ENCODE measurements at regions of chr9 and their contacts with region 1.

Region 1: GRCh38 chr9:71806901-71807307 is 38.6 kb upstream of the CEMIP2 start:
- DNase-seq: peak; percentile 80 to 91 (median 90)
- H3K4me3 ChIP-seq: no peak overlapping the region
- H3K27ac ChIP-seq: no peak overlapping the region
- H3K4me1 ChIP-seq: peaks cover 0 to 4% (median 4%) of the 10 kb centered on the region in 4 experiments
- H3K27me3 ChIP-seq: no peaks in the 10 kb centered on the region

Region 2: DNA sequence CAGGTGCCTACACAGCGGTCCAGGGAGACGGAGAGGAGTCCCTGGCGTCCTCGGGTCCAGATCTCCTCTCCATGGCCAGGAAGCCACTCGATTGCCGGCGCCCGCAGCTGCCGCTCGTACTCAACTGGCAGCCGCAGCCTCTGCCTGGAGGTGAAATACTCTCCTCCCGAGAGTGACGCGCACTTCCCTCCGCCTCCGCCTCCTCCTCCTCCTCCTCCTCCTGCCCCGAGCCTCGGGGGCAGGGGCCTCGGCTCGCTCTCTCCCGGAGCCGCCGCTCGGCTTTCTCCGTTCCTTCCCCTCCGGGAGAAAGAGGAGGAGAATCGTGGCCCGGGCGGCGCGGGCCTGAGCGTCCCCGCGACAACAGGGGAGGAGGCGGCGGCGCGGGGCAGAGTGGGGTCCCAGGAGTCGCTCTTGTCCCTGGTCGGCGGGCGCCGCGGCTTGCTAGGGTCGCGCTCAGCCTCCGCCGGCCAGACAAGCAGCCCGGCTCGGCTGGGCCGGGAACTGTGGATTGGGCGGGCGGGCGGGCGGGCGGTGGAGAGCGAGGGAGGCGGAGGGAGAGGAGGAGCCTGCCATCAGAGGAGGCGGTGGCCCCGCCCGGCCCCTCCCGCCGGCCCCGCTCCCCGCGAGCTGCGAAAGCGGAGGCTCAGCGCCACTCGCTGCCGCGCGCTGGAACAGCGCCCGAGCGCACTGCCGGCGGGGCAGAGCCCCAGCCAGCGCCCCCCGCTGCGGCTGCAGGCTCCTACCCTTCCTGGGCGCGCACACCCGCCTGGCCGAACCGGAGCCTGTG is 38.3 kb before region 1 on chr9 and contains the start of gene CEMIP2:
- CTCF ChIA-PET with region 1: no interaction called
- POLR2A ChIA-PET with region 1: no interaction called
- DNase-seq: peak; percentile 90 to 96 (median 95)
- H3K4me3 ChIP-seq: peak within 1 kb of the TSS; percentile 72 to 98 (median 90)
- H3K27ac ChIP-seq: peak within 1 kb of the TSS; percentile 66 to 77
- H3K4me1 ChIP-seq: peaks cover 22 to 54% (median 41%) of the 10 kb centered on the region in 4 experiments
- H3K27me3 ChIP-seq: no peaks in the 10 kb centered on the region

Region 3: DNA sequence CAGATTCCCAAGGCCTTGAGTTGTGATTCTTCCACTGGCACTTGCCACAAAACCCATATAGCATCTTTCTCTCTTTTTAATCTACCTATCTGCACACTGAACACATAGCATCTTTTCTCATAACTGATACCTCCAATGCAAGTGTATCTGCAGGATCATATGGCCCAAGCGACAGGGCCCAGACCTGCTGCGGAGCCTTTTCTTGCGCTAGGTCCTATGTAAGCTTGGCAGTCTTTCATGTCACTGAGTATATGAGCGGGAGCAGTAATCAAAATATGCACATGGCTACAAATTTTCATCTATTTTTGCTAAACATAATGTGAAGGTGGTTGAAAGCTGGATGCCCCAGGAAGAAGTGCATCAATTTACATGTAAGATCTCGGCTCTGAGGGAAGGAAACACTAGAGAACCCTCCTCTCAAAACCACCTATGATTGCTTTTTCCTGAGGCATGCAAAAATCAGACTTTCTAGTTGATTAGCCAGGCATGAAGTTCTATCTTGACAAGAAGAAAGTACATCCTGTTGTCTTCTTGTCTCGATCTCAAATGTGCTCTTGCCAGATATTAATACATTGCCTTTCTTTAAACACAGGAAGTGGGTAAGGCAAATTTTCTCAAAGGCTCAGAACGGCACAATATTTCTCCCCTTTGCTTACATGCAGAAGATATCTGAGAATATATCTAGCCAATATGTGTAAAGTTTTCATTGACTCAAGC is 11.6 kb before region 1 on chr9:
- CTCF ChIA-PET with region 1: interaction called, 21 read pairs
- POLR2A ChIA-PET with region 1: no interaction called
- DNase-seq: peak in 2 of 3 donors; percentile 33 to 58
- H3K4me3 ChIP-seq: no peak overlapping the region
- H3K27ac ChIP-seq: no peak overlapping the region
- H3K4me1 ChIP-seq: peaks cover 2 to 10% (median 9%) of the 10 kb centered on the region in 4 experiments
- H3K27me3 ChIP-seq: no peaks in the 10 kb centered on the region

Region 4: DNA sequence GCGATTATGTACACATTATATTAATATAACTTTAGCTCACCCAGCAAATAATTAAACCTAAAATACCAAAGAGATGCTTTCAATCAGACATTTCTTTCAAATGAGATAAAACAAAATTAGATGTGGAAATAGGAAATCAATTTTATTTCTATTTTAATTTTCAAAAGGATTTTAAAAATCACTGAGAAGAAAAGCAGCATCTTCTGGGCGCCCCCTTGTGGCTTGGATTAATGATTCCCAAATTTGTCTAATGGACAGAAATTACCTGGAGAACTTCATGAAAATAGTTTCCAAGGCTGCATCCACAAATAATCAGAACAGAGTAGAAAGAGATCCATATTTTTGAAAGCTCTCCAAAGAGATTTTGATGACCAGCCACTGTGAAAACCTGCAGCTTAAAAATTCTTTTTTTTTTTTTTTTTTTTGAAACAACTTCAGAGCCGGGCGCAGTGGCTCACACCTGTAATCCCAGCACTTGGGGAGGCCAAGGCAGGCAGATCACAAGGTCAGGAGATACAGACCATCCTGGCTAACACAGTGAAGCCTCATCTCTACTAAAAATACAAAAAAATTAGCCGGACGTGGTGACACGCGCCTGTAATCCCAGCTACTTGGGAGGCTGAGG is 12.3 kb after region 1 on chr9:
- CTCF ChIA-PET with region 1: interaction called, 33 read pairs
- POLR2A ChIA-PET with region 1: no interaction called
- DNase-seq: peak; percentile 37 to 66 (median 59)
- H3K4me3 ChIP-seq: no peak overlapping the region
- H3K27ac ChIP-seq: no peak overlapping the region
- H3K4me1 ChIP-seq: peaks cover 18 to 28% (median 21%) of the 10 kb centered on the region in 4 experiments
- H3K27me3 ChIP-seq: no peaks in the 10 kb centered on the region

Region 5: GRCh38 chr9:71853084-71853483 is 46.2 kb after region 1 on chr9:
- CTCF ChIA-PET with region 1: no interaction called
- POLR2A ChIA-PET with region 1: no interaction called
- DNase-seq: no peak
- H3K4me3 ChIP-seq: no peak overlapping the region
- H3K27ac ChIP-seq: no peak overlapping the region
- H3K4me1 ChIP-seq: no peaks in the 10 kb centered on the region
- H3K27me3 ChIP-seq: no peaks in the 10 kb centered on the region

Region 6: DNA sequence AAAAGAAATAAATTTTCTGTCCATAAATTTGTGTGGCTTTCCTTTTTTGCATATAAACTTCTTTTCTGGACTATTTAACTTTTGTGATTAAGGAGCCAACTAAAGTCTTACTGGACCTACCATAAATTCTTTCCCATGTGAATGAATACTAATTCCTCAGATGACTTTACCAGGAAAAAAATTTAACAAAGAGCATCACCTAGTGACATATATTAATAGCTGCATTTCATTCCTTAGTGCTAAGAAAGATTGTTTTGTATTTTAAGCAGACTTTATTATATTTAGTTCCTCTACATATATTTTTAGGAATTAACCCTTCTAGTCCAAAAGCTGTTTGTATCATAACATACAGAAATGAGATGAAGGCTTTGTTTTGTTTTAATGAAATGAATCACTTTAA is 168.9 kb after region 1 on chr9:
- CTCF ChIA-PET with region 1: interaction called, 15 read pairs
- POLR2A ChIA-PET with region 1: no interaction called
- DNase-seq: peak in 2 of 3 donors; percentile 14 to 21
- H3K4me3 ChIP-seq: no peak overlapping the region
- H3K27ac ChIP-seq: no peak overlapping the region
- H3K4me1 ChIP-seq: peaks cover 0 to 7% (median 3%) of the 10 kb centered on the region in 4 experiments
- H3K27me3 ChIP-seq: no peaks in the 10 kb centered on the region

Region 7: DNA sequence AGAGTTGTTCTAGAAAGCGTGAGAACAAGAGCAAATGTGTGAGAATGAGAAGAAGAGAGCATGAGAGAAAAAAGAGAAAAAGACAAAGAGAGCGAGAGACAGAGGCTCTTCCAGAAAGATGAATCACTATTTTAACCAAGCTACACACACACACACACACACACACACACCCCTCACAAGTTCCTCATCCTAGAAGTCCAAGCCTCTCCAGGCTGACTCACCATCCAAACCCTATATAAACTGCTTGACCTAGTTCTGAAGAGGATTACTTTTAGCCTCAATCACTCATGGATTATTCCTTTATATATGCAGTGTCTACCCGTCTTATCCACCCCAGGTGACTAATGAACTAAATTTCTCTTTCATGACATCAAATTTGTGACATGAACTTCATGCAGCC is 215.9 kb after region 1 on chr9:
- CTCF ChIA-PET with region 1: interaction called, 93 read pairs
- POLR2A ChIA-PET with region 1: no interaction called
- DNase-seq: peak; percentile 39 to 73 (median 70)
- H3K4me3 ChIP-seq: no peak overlapping the region
- H3K27ac ChIP-seq: no peak overlapping the region
- H3K4me1 ChIP-seq: peaks cover 0 to 2% (median 0%) of the 10 kb centered on the region in 4 experiments
- H3K27me3 ChIP-seq: no peaks in the 10 kb centered on the region

Region 8: DNA sequence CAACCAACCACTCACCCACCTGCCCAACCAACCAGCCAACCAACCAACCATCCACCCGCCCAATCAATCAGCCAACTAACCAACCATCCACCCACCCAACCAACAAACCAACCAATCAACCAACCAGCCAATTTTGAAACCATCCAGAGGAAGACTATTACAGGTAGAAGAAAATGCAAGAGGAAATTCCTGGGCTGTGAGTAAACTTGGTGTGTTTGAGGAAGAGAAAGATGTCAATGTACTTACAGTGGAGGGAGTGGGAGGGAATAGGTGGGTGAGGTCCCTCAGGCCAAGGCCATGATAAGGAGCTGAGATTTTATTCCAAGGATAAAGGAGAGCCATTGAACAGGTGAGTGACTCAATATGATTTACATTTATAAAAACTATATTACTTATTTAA is 223.1 kb after region 1 on chr9:
- CTCF ChIA-PET with region 1: interaction called, 93 read pairs
- POLR2A ChIA-PET with region 1: no interaction called
- DNase-seq: no peak
- H3K4me3 ChIP-seq: no peak overlapping the region
- H3K27ac ChIP-seq: no peak overlapping the region
- H3K4me1 ChIP-seq: no peaks in the 10 kb centered on the region
- H3K27me3 ChIP-seq: no peaks in the 10 kb centered on the region

Measured in common myeloid progenitor, CD34-positive (primary cell).